OCI-LY7 (cell line): ENCODE measurements at regions of chr9 and their contacts with region 1.

Region 1: GRCh38 chr9:35945341-35946018 is 12.5 kb downstream of the OR2S2 start:
- DNase-seq: peak; percentile 63
- H3K4me3 ChIP-seq: no peak overlapping the region
- H3K27ac ChIP-seq: no peak overlapping the region
- H3K4me1 ChIP-seq: peaks cover 9% of the 10 kb centered on the region
- CTCF ChIP-seq: peak; percentile 97

Region 2: GRCh38 chr9:35903049-35903448 is 42.4 kb before region 1 on chr9:
- CTCF ChIA-PET with region 1: no interaction called
- POLR2A ChIA-PET with region 1: interaction called, 3 read pairs
- intact Hi-C with region 1: loop called (anchors 1 kb)
- DNase-seq: peak; percentile 76
- H3K4me3 ChIP-seq: no peak overlapping the region
- H3K27ac ChIP-seq: no peak overlapping the region
- H3K4me1 ChIP-seq: peaks cover 22% of the 10 kb centered on the region
- CTCF ChIP-seq: peak; percentile 94